ENCODE measurements at regions of chr19 and their contacts with region 1.

Region 1: GRCh38 chr19:2391118-2391725 is 31.2 kb downstream of the TMPRSS9 start:
- DNase-seq: peak; percentile 84
- H3K4me3 Mint-ChIP-seq: no peak overlapping the region
- H3K27ac Mint-ChIP-seq: no peak overlapping the region
- H3K4me1 Mint-ChIP-seq: peaks cover 7% of the 10 kb centered on the region
- H3K27me3 Mint-ChIP-seq: peaks cover 6% of the 10 kb centered on the region

Region 2: DNA sequence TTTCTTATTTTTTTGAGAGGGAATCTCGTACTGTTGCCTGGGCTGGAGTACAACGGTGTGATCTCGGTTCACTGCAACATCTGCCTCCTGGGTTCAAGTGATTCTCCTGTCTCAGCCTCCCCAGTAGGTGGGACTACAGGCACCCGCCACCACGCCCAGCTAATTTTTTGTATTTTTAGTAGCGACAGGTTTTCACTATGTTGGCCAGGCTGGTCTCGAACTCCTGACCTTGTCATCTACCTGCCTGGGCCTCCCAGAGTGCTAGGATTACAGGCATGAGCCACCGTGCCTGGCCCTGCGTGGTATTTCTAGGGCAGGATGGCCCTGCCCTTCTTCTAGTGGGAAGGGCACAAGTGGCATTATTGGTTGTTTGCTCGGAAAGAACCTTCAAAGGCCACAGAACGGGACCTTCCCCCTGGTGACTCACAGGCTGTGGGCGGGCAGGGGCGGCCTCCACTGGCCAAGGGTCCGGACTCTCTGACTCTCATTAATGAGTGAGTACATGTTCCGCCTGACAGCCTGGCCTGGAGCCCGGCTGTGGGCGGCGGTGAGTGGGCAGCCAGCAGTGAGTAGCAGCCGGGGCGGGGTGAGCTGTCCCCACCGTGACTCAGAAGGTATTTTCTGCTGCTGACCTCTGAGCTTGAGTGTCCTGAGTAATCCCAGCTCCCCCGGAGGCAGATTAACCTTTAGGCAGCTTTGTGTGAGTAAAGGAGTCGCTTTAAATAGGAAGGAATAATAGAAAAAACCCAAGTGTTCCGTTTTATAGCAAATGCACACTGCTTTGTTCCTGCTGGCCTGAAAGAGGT is 222.4 kb before region 1 on chr19:
- intact Hi-C with region 1: loop called (anchors 5 kb)
- DNase-seq: peak; percentile 81
- H3K4me3 Mint-ChIP-seq: peak overlapping the region; percentile 77
- H3K27ac Mint-ChIP-seq: peak overlapping the region; percentile 94
- H3K4me1 Mint-ChIP-seq: peaks cover 49% of the 10 kb centered on the region
- H3K27me3 Mint-ChIP-seq: peaks cover 2% of the 10 kb centered on the region

Region 3: GRCh38 chr19:2269244-2269947 is 121.8 kb before region 1 on chr19:
- intact Hi-C with region 1: loop called (anchors 10 kb)
- DNase-seq: peak; percentile 100
- H3K4me3 Mint-ChIP-seq: peak overlapping the region; percentile 93
- H3K27ac Mint-ChIP-seq: peak overlapping the region; percentile 91
- H3K4me1 Mint-ChIP-seq: peaks cover 31% of the 10 kb centered on the region
- H3K27me3 Mint-ChIP-seq: no peaks in the 10 kb centered on the region

Region 4: GRCh38 chr19:2328401-2329148 is 62.6 kb before region 1 on chr19 and contains the starts of genes LSM7 and SPPL2B:
- intact Hi-C with region 1: loop called (anchors 5 kb)
- DNase-seq: peak; percentile 98
- H3K4me3 Mint-ChIP-seq: peak within 1 kb of the TSS; percentile 95
- H3K27ac Mint-ChIP-seq: peak within 1 kb of the TSS; percentile 97
- H3K4me1 Mint-ChIP-seq: peaks cover 51% of the 10 kb centered on the region
- H3K27me3 Mint-ChIP-seq: no peaks in the 10 kb centered on the region
- total RNA-seq, gene LSM7: 190 and 192 TPM in 2 replicates
- total RNA-seq, gene SPPL2B: 69.7 and 69.8 TPM in 2 replicates

Measured in activated CD4-positive, alpha-beta T cell treated with anti-CD3 and anti-CD28 coated beads, Interleukin-2, amount 10 ng/mL, durations not matched to agents 24 days and 14 days (primary cell).